OCI-LY7 (cell line): ENCODE measurements at regions of chr17 and their contacts with region 1.

Region 1: DNA sequence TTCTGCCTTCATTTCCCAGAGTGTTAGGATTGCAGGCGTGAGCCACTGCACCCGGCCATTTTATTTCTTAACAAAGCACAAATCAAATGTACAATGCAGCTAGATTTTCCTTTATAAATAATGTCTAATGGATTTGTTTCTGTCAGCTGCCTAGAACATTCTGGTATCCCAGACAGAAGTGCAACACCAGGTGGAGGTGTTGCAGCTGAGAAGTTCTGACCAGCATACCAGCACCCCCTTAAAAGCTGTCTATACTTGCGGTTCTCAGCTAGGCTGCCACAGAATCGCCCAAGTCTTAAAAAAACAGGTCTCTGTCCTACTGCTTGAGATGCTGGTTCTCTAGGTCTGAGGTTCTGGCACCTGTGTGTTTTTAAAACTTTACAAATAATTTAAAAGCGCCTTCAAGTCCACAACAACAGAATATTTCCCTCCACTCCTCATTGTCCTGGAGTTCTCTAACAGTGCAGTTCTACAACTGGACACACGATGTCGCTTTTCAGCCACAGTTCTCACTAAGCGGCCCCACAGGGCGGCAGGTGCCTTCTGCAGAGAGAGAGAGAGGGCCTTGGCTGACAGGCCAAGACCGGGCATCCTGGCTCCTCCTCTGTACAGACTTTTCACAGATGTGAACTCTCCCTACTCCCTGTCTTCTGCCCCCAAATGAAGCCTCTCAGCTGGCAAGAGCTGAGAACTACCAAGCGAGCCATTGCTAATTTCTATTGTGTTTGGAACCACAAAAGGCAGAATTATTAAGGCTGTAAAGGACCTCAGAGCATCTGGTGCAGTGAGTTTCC is 32.6 kb upstream of the MEOX1 start:
- DNase-seq: peak; percentile 79
- H3K4me3 ChIP-seq: no peak overlapping the region
- H3K27ac ChIP-seq: no peak overlapping the region
- H3K4me1 ChIP-seq: no peaks in the 10 kb centered on the region
- CTCF ChIP-seq: peak; percentile 97

Region 2: GRCh38 chr17:43760254-43760852 is 66.1 kb after region 1 on chr17:
- CTCF ChIA-PET with region 1: interaction called, 4 read pairs
- POLR2A ChIA-PET with region 1: no interaction called
- intact Hi-C with region 1: loop called (anchors 1 kb)
- DNase-seq: peak; percentile 86
- H3K4me3 ChIP-seq: no peak overlapping the region
- H3K27ac ChIP-seq: no peak overlapping the region
- H3K4me1 ChIP-seq: no peaks in the 10 kb centered on the region
- CTCF ChIP-seq: peak; percentile 99

Region 3: GRCh38 chr17:43846221-43846712 is 152.0 kb after region 1 on chr17:
- CTCF ChIA-PET with region 1: no interaction called
- POLR2A ChIA-PET with region 1: no interaction called
- intact Hi-C with region 1: loop called (anchors 1 kb)
- DNase-seq: peak; percentile 55
- H3K4me3 ChIP-seq: no peak overlapping the region
- H3K27ac ChIP-seq: no peak overlapping the region
- H3K4me1 ChIP-seq: no peaks in the 10 kb centered on the region
- CTCF ChIP-seq: peak; percentile 91